ENCODE measurements at regions of chr11 and their contacts with region 1.

Region 1: GRCh38 chr11:44565211-44565952 is at the start of gene CD82:
- DNase-seq: peak; percentile 97
- ATAC-seq: peak; percentile 86
- H3K4me3 ChIP-seq: peak within 1 kb of the TSS; percentile 58 to 99 (median 81)
- H3K4me3 Mint-ChIP-seq: peak within 1 kb of the TSS; percentile 92
- H3K27ac ChIP-seq: peak within 1 kb of the TSS; percentile 46 to 80
- H3K27ac Mint-ChIP-seq: peak within 1 kb of the TSS; percentile 88
- H3K4me1 ChIP-seq: peaks cover 58 to 77% of the 10 kb centered on the region in 2 donors
- H3K4me1 Mint-ChIP-seq: peaks cover 75% of the 10 kb centered on the region
- H3K27me3 ChIP-seq: no peaks in the 10 kb centered on the region
- H3K27me3 Mint-ChIP-seq: no peaks in the 10 kb centered on the region
- CTCF ChIP-seq: peak; percentile 47
- total RNA-seq, gene CD82: 438 and 451 TPM in 2 replicates

Region 2: DNA sequence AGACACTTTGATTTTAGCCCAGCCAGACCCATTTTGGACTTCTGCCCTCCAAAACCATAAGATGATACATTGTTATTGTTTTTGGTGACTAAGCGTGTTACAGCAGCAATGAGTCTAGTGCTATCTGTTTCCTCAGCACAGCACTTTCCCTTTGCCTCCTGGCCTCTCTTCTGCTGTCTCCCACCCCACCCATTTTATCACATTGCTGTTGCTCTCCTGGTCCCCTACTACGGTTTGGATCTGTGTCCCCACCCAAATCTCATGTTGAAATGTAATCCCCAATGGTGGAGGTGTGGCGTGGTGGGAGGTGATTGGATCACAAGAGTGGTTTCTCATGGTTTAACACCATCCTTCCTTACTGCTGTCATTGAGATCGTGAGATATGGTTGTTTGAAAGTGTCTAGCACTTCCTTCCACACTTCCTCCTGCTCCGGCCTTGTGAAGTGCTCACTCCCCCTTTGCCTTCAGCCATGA is 59.8 kb before region 1 on chr11:
- CTCF ChIA-PET with region 1: no interaction called
- POLR2A ChIA-PET with region 1: no interaction called
- intact Hi-C with region 1: no loop called
- DNase-seq: no peak
- ATAC-seq: no peak
- H3K4me3 ChIP-seq: no peak overlapping the region
- H3K4me3 Mint-ChIP-seq: no peak overlapping the region
- H3K27ac ChIP-seq: no peak overlapping the region
- H3K27ac Mint-ChIP-seq: no peak overlapping the region
- H3K4me1 ChIP-seq: no peaks in the 10 kb centered on the region
- H3K4me1 Mint-ChIP-seq: no peaks in the 10 kb centered on the region
- H3K27me3 ChIP-seq: peaks cover 0 to 12% (median 3%) of the 10 kb centered on the region in 4 experiments
- H3K27me3 Mint-ChIP-seq: peaks cover 18% of the 10 kb centered on the region
- CTCF ChIP-seq: no peak

Region 3: GRCh38 chr11:44596525-44597276 is 31.3 kb after region 1 on chr11:
- CTCF ChIA-PET with region 1: interaction called, 130 read pairs
- POLR2A ChIA-PET with region 1: interaction called, 20 read pairs
- intact Hi-C with region 1: loop called (anchors 1 kb)
- DNase-seq: peak; percentile 90
- ATAC-seq: peak; percentile 25
- H3K4me3 ChIP-seq: peak overlapping the region in 2 of 5 experiments; percentile 9 to 28
- H3K4me3 Mint-ChIP-seq: peak overlapping the region; percentile 77
- H3K27ac ChIP-seq: peak overlapping the region; percentile 78 to 85
- H3K27ac Mint-ChIP-seq: peak overlapping the region; percentile 92
- H3K4me1 ChIP-seq: peaks cover 69 to 92% of the 10 kb centered on the region in 2 donors
- H3K4me1 Mint-ChIP-seq: peaks cover 94% of the 10 kb centered on the region
- H3K27me3 ChIP-seq: no peaks in the 10 kb centered on the region
- H3K27me3 Mint-ChIP-seq: no peaks in the 10 kb centered on the region
- CTCF ChIP-seq: no peak

Region 4: DNA sequence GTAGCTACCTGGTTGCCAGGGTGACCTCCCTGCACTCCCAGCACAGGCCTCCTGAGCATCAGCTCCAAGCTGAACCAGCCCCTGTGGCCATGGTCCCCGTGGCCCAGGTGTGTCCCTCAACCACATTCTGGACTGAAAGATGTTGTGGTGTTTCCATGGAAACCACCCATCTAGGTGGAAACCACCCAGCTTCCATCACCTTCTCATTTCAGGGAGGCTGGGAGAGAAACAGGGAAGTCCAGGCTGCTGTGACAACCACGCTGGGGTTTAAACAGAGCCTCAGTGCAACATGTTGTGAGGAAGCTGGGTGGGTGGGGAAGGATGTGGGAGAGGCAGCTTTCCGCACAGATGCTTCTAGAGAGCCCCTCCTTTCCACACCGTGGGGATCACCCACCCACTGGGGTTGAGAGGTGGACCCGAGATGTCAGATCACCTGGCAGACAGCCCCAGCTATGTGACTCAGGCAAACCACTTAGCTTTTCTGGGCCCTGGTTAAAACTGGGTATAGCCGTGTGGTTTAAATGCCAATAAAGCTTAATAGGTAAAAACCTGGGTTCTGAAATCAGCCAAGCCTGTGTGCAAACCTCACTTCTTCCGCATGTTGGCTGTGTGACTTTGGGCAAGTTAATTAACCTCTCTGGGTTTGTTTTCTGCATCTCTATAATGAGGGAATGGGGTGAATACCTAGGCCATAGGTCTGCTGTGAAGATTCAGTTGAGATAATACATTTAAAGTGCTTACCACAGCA is 46.5 kb after region 1 on chr11:
- CTCF ChIA-PET with region 1: interaction called, 816 read pairs
- POLR2A ChIA-PET with region 1: interaction called, 59 read pairs
- intact Hi-C with region 1: loop called (anchors 1 kb)
- DNase-seq: peak; percentile 94
- ATAC-seq: peak; percentile 51
- H3K4me3 ChIP-seq: peak overlapping the region in 2 of 5 experiments; percentile 2 to 40
- H3K4me3 Mint-ChIP-seq: peak overlapping the region; percentile 59
- H3K27ac ChIP-seq: peak overlapping the region; percentile 97 to 99
- H3K27ac Mint-ChIP-seq: peak overlapping the region; percentile 96
- H3K4me1 ChIP-seq: peaks cover 97 to 100% of the 10 kb centered on the region in 2 donors
- H3K4me1 Mint-ChIP-seq: peaks cover 97% of the 10 kb centered on the region
- H3K27me3 ChIP-seq: no peaks in the 10 kb centered on the region
- H3K27me3 Mint-ChIP-seq: no peaks in the 10 kb centered on the region
- CTCF ChIP-seq: no peak

Region 5: DNA sequence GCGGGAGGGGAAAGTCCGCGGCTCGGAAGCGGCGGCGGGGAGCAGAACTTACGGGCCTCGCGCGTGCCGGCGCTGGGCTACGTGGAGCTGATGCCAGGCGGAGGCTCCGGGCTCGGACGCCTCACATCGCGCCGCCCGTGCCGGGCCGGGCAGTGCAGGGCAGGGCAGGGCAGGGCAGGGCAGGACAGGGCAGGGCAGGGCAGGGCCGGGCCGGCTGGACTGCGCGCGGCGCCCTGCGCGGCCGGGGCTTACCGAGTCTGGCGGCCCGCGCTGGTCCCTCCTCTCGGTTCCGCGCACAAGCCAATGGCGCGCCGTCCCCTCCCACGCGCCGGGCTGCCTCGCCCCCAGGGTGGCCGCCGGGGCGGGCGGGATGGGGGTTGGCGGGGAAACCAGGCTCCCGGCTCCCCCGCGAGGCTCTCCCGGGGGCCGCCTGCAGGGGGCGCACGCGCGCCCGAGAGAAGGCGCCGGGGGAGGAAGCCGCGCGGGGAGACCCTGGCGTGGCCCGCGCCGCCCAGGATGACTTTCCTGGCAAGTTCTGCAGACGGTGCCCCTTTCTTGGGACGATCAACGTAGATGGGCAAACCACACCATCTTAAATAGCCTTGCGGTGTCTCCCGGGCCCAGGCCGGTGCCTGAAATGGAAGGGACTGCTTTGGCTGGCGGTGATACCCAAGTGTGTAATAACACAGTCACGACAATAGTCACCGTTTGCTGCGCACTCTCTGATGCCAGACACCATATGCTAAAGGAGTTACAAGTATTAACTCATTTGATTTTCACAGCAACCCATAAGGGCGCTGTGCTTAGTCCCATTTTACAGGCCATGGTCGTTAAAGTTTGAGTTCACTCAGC is 385.5 kb after region 1 on chr11 and contains the start of gene TP53I11:
- CTCF ChIA-PET with region 1: no interaction called
- POLR2A ChIA-PET with region 1: no interaction called
- intact Hi-C with region 1: loop called (anchors 10 kb)
- DNase-seq: peak; percentile 84
- ATAC-seq: peak; percentile 76
- H3K4me3 ChIP-seq: peak within 1 kb of the TSS; percentile 51 to 97 (median 83)
- H3K4me3 Mint-ChIP-seq: peak within 1 kb of the TSS; percentile 89
- H3K27ac ChIP-seq: peak within 1 kb of the TSS; percentile 64 to 85
- H3K27ac Mint-ChIP-seq: peak within 1 kb of the TSS; percentile 78
- H3K4me1 ChIP-seq: peaks cover 13 to 31% of the 10 kb centered on the region in 2 donors
- H3K4me1 Mint-ChIP-seq: peaks cover 61% of the 10 kb centered on the region
- H3K27me3 ChIP-seq: no peaks in the 10 kb centered on the region
- H3K27me3 Mint-ChIP-seq: no peaks in the 10 kb centered on the region
- CTCF ChIP-seq: peak; percentile 80
- total RNA-seq, gene TP53I11: 229 and 240 TPM in 2 replicates

Region 6: DNA sequence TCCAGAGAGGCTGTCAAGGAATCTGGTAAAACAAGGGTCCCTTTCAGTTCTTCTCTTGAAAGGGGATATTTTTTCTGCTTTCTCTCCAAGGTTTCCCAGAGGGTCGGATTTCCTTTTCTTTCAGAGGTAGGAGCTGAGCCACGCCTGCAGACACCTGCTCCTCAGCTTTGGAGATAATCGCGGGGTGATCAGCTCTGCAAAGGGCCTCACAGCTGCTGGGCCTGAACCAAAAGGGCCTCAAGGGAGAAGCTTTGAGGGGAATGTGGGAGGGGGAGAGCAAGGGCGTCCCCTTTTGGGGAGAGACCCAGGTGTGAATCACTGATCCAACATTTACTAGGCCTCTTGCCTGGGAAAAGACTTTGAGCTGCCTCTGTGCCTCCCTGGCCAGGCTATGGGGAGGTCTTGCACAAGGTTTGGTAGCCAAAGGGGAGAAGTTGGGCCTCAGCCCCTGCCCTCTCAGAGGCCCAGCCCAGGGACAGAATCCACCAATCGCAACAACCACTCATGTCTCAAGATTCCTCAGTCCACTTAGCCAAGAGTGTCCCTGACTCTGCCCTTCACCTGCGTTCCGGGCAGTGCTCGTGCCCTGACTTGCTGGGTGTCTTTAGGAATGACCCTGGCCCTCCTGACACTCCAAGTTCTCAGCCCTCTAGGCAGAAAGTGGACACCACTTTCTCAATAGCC is 399.3 kb after region 1 on chr11:
- CTCF ChIA-PET with region 1: no interaction called
- POLR2A ChIA-PET with region 1: no interaction called
- intact Hi-C with region 1: no loop called
- DNase-seq: no peak
- ATAC-seq: no peak
- H3K4me3 ChIP-seq: no peak overlapping the region
- H3K4me3 Mint-ChIP-seq: no peak overlapping the region
- H3K27ac ChIP-seq: no peak overlapping the region
- H3K27ac Mint-ChIP-seq: no peak overlapping the region
- H3K4me1 ChIP-seq: no peaks in the 10 kb centered on the region
- H3K4me1 Mint-ChIP-seq: peaks cover 3% of the 10 kb centered on the region
- H3K27me3 ChIP-seq: no peaks in the 10 kb centered on the region
- H3K27me3 Mint-ChIP-seq: no peaks in the 10 kb centered on the region
- CTCF ChIP-seq: no peak

Region 7: GRCh38 chr11:45147017-45147728 is 581.8 kb after region 1 on chr11:
- CTCF ChIA-PET with region 1: no interaction called
- POLR2A ChIA-PET with region 1: no interaction called
- intact Hi-C with region 1: loop called (anchors 5 kb)
- DNase-seq: peak; percentile 95
- ATAC-seq: peak; percentile 97
- H3K4me3 ChIP-seq: peak overlapping the region; percentile 60 to 92 (median 72)
- H3K4me3 Mint-ChIP-seq: peak overlapping the region; percentile 92
- H3K27ac ChIP-seq: peak overlapping the region; percentile 63 to 86
- H3K27ac Mint-ChIP-seq: peak overlapping the region; percentile 95
- H3K4me1 ChIP-seq: peaks cover 19 to 27% of the 10 kb centered on the region in 2 donors
- H3K4me1 Mint-ChIP-seq: peaks cover 42% of the 10 kb centered on the region
- H3K27me3 ChIP-seq: peaks cover 0 to 12% (median 8%) of the 10 kb centered on the region in 4 experiments
- H3K27me3 Mint-ChIP-seq: peaks cover 12% of the 10 kb centered on the region
- CTCF ChIP-seq: no peak

Measured in B cell (primary cell).